Head of caudate nucleus (tissue), 42 donors: ENCODE measurements at regions of chr1 and their contacts with region 1.

Region 1: GRCh38 chr1:156767101-156767878 is at the start of gene PRCC:
- DNase-seq: peak; percentile 97 to 100 (median 100)

Region 2: DNA sequence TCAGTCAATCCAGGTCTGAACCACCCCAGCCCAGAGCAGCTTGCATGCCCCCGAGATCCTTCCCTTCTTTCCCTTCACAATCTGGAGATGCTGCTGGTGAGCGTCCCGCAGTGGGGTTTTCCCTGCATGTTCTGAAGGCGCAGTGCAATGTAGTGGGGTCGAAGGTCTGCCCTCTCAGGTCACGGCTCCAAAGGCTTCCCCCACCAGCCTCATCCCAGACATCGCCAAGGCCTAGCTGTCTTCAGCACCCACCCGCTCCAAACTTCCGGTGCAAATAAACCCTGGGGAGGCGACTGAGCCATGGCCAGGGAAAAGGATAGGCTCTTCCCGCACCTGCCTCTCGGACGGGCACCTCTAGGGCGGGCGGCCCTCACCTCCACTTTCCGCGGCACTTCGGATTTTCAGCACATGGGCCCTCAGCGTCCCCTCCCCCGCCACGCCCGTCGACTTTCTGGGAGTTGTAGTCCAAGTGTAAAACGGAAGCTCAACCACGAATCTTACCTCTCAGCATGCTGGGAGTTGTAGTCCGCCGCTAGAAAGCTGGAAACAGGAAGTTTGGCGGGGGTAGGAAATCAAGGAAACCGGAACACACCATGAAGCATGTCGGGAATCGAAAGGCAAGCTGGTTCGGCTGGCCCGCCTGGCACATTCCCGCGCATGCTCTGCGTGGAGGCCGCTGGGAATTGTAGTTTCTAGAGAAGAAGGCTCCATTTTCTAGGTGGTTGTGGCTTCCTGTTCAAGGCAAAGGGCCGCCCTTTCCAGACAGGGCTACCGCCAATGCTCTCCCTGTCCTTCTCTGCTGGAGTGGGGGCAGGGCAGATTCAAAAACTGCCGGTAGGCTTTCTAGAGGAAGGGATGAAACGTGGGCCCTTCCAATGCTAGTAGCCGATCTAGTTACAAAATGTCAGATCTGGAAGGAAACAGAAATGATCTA is 26.3 kb before region 1 on chr1 and contains the start of gene MRPL24:
- intact Hi-C with region 1: loop called (anchors 1 kb)
- DNase-seq: peak; percentile 95 to 100 (median 99)

Region 3: GRCh38 chr1:156751758-156752757 is 15.2 kb before region 1 on chr1:
- intact Hi-C with region 1: loop called (anchors 2 kb)
- DNase-seq: peak; percentile 94 to 99 (median 98)